PC-9 (cell line): ENCODE measurements at regions of chr7 and their contacts with region 1.

Region 1: GRCh38 chr7:2209146-2209960 is 23.4 kb downstream of the MAD1L1 start:
- DNase-seq: peak in 1 of 2 experiments; percentile 49
- H3K4me3 ChIP-seq: no peak overlapping the region
- H3K27ac ChIP-seq: no peak overlapping the region
- H3K4me1 ChIP-seq: no peaks in the 10 kb centered on the region
- H3K27me3 ChIP-seq: no peaks in the 10 kb centered on the region
- CTCF ChIP-seq: peak; percentile 68

Region 2: GRCh38 chr7:1579481-1580421 is 629.6 kb before region 1 on chr7:
- CTCF ChIA-PET with region 1: no interaction called
- POLR2A ChIA-PET with region 1: no interaction called
- intact Hi-C with region 1: loop called (anchors 5 kb)
- DNase-seq: peak in 1 of 2 experiments; percentile 78
- H3K4me3 ChIP-seq: no peak overlapping the region
- H3K27ac ChIP-seq: no peak overlapping the region
- H3K4me1 ChIP-seq: no peaks in the 10 kb centered on the region
- H3K27me3 ChIP-seq: peaks cover 8% of the 10 kb centered on the region
- CTCF ChIP-seq: peak; percentile 92

Region 3: DNA sequence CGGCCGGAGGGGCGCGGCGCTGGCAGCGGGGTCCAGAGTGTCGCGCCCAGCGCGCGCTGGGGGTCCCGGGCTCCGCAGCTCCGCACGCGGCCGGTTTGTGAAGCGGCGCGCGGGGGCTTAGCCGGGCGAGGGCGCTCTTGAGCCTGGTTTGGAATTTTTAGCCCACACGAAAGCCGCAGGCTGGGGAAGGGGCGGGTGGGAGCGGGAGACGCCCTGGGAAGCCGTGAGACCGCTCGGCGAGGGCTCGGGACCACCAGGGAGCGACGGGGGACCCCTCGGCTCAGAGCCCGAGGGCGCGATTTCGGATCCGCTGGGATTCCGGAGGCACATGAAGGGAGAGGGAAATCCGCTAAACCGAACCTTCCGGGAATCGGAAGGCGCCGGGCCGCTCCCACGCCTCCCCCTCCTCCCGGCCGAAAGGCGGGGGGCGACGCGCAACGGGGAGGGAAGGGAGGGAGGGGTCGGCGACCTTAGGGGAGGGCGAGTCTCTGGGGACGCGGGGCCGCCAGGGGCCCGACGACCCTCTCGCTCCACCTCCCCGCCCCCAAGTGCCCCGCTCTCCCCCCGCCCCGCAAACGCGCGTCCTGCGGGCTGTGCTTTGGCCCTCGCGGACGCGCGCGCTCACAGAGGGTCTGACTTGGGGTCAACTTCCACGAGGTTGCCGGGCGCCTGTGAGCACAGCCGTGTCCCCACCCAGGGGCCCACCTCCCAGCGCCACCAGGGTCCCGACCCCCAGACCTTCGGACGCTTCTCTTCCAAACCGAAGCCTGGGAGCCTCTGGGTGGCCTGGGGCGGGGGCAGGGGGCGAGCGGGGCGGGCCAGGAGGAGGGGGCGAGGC is 544.4 kb before region 1 on chr7:
- CTCF ChIA-PET with region 1: no interaction called
- POLR2A ChIA-PET with region 1: no interaction called
- intact Hi-C with region 1: loop called (anchors 10 kb)
- DNase-seq: peak in 1 of 2 experiments; percentile 66
- H3K4me3 ChIP-seq: peak overlapping the region; percentile 38; the same call in 1 of the 2 replicates
- H3K27ac ChIP-seq: no peak overlapping the region
- H3K4me1 ChIP-seq: peaks cover 8% of the 10 kb centered on the region; the same call in 1 of the 2 replicates
- H3K27me3 ChIP-seq: peaks cover 60% of the 10 kb centered on the region
- CTCF ChIP-seq: peak; percentile 79

Region 4: DNA sequence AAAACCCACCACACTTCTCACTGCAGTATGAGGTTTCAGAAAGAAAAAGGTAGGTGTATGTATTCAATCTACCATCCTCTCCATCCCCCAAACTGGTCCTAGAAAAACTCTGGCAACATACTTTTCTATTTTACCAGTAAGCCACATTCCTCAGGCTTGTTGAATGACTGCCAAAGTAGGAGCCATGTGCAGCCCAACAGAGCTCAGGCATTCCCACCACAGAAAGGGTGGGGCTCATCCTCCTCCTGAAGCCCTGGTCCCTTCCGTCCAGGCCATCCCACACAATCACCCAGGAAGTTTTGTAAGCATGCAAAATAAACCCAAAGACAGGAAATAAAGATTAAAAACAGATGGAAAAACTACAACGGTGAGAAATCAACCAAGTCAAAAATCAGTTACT is 33.8 kb before region 1 on chr7:
- CTCF ChIA-PET with region 1: interaction called, 15 read pairs
- POLR2A ChIA-PET with region 1: no interaction called
- intact Hi-C with region 1: no loop called
- DNase-seq: peak; percentile 53 to 84
- H3K4me3 ChIP-seq: no peak overlapping the region
- H3K27ac ChIP-seq: no peak overlapping the region
- H3K4me1 ChIP-seq: no peaks in the 10 kb centered on the region
- H3K27me3 ChIP-seq: no peaks in the 10 kb centered on the region
- CTCF ChIP-seq: no peak

Region 5: DNA sequence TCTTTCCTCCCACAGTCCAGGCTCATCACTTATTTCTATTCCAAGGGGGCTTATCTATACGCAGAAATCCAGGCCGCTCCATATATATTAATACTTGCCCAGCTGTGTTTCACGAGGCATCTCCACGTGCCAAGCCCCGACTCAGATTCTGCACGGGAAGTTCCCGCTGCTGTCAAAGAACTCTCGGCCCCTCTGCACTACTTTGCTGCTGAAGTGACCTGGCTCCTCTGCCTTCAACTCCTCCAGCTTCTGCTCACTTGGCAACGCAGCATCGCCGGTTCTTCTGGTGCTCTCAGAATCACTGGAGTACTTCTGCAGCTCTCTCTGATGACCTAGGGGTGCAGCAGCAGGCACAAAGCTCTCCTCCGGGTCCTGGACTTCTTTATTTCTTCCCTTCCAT is 184.4 kb after region 1 on chr7:
- CTCF ChIA-PET with region 1: no interaction called
- POLR2A ChIA-PET with region 1: no interaction called
- intact Hi-C with region 1: no loop called
- DNase-seq: no peak
- H3K4me3 ChIP-seq: no peak overlapping the region
- H3K27ac ChIP-seq: no peak overlapping the region
- H3K4me1 ChIP-seq: peaks cover 6% of the 10 kb centered on the region; the same call in 1 of the 2 replicates
- H3K27me3 ChIP-seq: no peaks in the 10 kb centered on the region
- CTCF ChIP-seq: no peak

Region 6: GRCh38 chr7:3682028-3682710 is 1472.8 kb after region 1 on chr7:
- CTCF ChIA-PET with region 1: no interaction called
- POLR2A ChIA-PET with region 1: no interaction called
- intact Hi-C with region 1: no loop called
- DNase-seq: no peak
- H3K4me3 ChIP-seq: no peak overlapping the region
- H3K27ac ChIP-seq: no peak overlapping the region
- H3K4me1 ChIP-seq: no peaks in the 10 kb centered on the region
- H3K27me3 ChIP-seq: peaks cover 72% of the 10 kb centered on the region
- CTCF ChIP-seq: no peak